Panc1 (cell line): ENCODE measurements at regions of chr10 and their contacts with region 1.

Region 1: GRCh38 chr10:7075110-7075509 is 335.7 kb downstream of the SFMBT2 start:
- DNase-seq: no peak
- ATAC-seq: no peak
- H3K4me3 ChIP-seq: no peak overlapping the region
- H3K27ac ChIP-seq: no peak overlapping the region
- H3K4me1 ChIP-seq: no peaks in the 10 kb centered on the region
- H3K27me3 ChIP-seq: no peaks in the 10 kb centered on the region
- CTCF ChIP-seq: no peak

Region 2: DNA sequence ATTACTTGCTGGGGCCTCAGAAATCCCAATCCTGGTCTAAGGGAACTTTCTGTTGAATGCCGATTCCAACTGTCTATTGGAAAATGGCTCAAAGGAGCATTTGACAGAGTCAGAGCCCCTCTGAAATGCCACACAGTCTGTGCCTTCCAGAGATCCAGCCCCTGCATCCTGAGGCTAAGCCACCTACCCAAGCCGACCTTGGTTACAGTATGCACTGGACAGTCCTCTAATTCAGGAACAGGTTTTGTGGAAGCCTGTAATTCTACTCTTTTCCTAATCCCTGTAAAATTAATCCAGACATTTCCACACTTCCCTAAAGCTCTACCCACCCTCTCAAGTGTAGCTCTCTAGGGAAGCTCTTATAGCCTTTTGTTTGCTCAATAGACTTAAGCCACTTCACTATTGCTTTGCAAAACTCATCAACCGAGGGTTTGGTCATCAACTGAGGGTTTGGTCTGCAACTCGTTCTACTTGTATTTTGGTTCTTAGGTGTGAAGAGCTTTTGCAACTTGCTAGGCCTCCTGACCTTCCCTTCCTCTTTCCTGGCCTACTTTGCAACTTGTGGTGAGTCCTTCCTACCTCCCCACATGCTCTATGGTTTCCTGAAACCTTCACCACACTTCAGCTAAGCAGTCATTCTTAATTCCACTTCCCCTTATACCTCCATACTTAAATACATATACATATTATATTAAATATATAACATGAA is 29.1 kb before region 1 on chr10:
- CTCF ChIA-PET with region 1: no interaction called
- POLR2A ChIA-PET with region 1: no interaction called
- in situ Hi-C with region 1: no loop called
- intact Hi-C with region 1: loop called (anchors 2 kb)
- DNase-seq: no peak
- ATAC-seq: no peak
- H3K4me3 ChIP-seq: no peak overlapping the region
- H3K27ac ChIP-seq: no peak overlapping the region
- H3K4me1 ChIP-seq: no peaks in the 10 kb centered on the region
- H3K27me3 ChIP-seq: no peaks in the 10 kb centered on the region
- CTCF ChIP-seq: no peak

Region 3: DNA sequence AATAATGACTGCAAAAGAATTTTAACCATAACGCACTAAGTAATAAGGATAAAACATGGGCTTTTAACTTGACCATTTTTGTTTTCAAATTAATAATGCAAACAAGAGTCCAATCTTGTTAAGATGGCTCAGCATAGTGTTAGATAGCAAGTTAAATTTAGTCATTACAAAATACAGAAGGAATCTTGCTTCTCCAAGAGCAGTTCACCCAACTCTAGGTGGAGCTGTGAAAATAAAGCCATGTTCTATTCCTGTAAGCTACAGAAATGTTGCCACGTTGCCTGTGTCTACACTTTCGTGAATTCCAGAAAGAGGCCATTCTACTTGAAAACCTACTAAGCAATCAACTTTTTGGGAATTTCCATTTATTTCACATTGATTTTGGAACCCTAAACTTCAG is 143.9 kb after region 1 on chr10:
- CTCF ChIA-PET with region 1: no interaction called
- POLR2A ChIA-PET with region 1: no interaction called
- in situ Hi-C with region 1: no loop called
- intact Hi-C with region 1: no loop called
- DNase-seq: peak; percentile 17
- ATAC-seq: no peak
- H3K4me3 ChIP-seq: no peak overlapping the region
- H3K27ac ChIP-seq: no peak overlapping the region
- H3K4me1 ChIP-seq: no peaks in the 10 kb centered on the region
- H3K27me3 ChIP-seq: no peaks in the 10 kb centered on the region
- CTCF ChIP-seq: peak; percentile 5; the same call in 1 of the 2 replicates

Region 4: DNA sequence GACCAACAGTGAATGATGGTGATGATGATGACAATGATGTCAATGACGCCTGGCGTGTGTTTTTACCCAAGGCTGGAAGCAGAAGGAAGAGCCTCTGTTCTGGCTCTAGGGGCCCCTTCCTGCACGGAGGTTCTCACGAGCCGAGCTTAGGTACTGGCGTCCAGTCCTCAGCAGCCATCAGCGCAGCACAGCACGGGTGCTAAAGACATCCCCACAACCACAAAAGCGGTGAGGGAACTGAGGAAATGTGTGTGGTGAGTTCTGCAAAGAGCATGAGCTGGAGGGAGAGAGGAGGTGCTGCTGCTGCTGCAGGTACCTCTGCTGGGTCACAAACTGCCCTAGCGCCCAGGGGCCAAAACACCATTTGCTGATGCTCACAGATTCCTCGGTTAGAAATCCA is 254.1 kb after region 1 on chr10:
- CTCF ChIA-PET with region 1: no interaction called
- POLR2A ChIA-PET with region 1: no interaction called
- in situ Hi-C with region 1: no loop called
- intact Hi-C with region 1: no loop called
- DNase-seq: no peak
- ATAC-seq: no peak
- H3K4me3 ChIP-seq: no peak overlapping the region
- H3K27ac ChIP-seq: no peak overlapping the region
- H3K4me1 ChIP-seq: no peaks in the 10 kb centered on the region
- H3K27me3 ChIP-seq: no peaks in the 10 kb centered on the region
- CTCF ChIP-seq: no peak